ENCODE measurements at regions of chr4 and their contacts with region 1.

Region 1: GRCh38 chr4:83054928-83055327 is 19.9 kb downstream of the COPS4 start:
- DNase-seq: peak; percentile 44
- ATAC-seq: peak; percentile 37; the same call in 1 of the 2 replicates
- H3K4me3 ChIP-seq: no peak overlapping the region
- H3K27ac ChIP-seq: no peak overlapping the region
- H3K4me1 ChIP-seq: no peaks in the 10 kb centered on the region
- H3K27me3 ChIP-seq: no peaks in the 10 kb centered on the region
- CTCF ChIP-seq: peak; percentile 64

Region 2: GRCh38 chr4:83284193-83285054 is 229.5 kb after region 1 on chr4 and contains the start of gene COQ2:
- CTCF ChIA-PET with region 1: interaction called, 6 read pairs
- POLR2A ChIA-PET with region 1: no interaction called
- intact Hi-C with region 1: loop called (anchors 1 kb)
- DNase-seq: peak; percentile 87
- ATAC-seq: peak; percentile 86
- H3K4me3 ChIP-seq: peak within 1 kb of the TSS; percentile 91
- H3K27ac ChIP-seq: peak within 1 kb of the TSS; percentile 81
- H3K4me1 ChIP-seq: peaks cover 27% of the 10 kb centered on the region
- H3K27me3 ChIP-seq: no peaks in the 10 kb centered on the region
- CTCF ChIP-seq: 0 out of 2 replicates have a peak, but pooled peaks have one; percentile 15
- total RNA-seq, gene COQ2: 22.0 and 23.8 TPM in 2 replicates

Measured in PC-3 (cell line).